ENCODE measurements at regions of chr16 and their contacts with region 1.

Region 1: GRCh38 chr16:83689385-83689831 is 118.4 kb upstream of the HSBP1 start:
- DNase-seq: peak in 1 of 2 donors; percentile 55
- ATAC-seq: peak; percentile 65
- H3K4me3 ChIP-seq: no peak overlapping the region
- H3K27ac ChIP-seq: peak overlapping the region in 1 of 2 donors; percentile 3
- H3K4me1 ChIP-seq: no peaks in the 10 kb centered on the region
- H3K27me3 ChIP-seq: no peaks in the 10 kb centered on the region

Region 2: GRCh38 chr16:83717814-83718213 is 28.4 kb after region 1 on chr16:
- intact Hi-C with region 1: loop called in 1 of 2 experiments (anchors 2 kb)
- DNase-seq: no peak
- ATAC-seq: no peak
- H3K4me3 ChIP-seq: no peak overlapping the region
- H3K27ac ChIP-seq: no peak overlapping the region
- H3K4me1 ChIP-seq: peaks cover 2 to 3% of the 10 kb centered on the region in 2 donors
- H3K27me3 ChIP-seq: no peaks in the 10 kb centered on the region

Region 3: DNA sequence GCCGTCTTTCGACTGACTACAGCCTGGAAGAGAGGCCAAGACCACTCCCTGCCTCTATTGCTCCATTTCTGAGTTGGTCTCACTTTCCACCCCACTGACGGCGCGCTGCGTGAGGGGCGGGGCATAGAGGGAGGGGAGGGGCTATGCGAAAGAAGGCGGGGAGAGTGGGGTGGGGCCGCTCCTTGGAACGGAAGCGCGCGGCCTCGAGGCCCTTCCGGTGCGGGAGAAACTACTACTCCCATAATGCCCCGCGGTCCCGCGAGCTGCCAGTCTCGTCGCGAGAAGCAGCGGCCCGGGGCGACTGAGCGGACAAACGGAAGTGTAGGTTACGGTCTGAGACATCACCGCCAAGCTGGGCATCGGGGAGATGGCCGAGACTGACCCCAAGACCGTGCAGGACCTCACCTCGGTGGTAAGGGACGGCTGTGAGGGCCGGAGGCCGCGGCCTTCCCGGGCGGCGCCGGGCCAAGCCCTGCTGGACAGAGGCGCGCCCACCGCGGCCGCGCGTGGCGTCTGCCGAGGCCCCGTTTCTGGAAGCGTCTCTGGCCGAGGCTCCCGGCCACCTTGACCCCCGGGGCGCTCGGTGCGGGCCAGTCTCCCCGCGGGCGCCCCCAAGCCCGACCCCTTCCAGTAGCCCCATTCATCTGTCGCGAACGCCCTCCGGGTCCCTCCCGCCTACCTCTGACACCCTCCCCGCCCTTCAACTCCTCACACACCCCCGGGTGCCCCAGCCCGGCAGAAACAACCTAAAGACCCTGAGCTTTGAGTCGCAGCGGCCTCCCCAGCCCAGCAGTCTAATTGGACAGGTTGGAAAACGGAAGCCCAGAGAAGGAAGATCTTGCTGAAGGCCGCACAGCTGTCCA is 118.5 kb after region 1 on chr16 and contains the start of gene HSBP1:
- intact Hi-C with region 1: loop called (anchors 5 to 10 kb)
- DNase-seq: peak; percentile 97 to 98
- ATAC-seq: peak; percentile 98
- H3K4me3 ChIP-seq: peak within 1 kb of the TSS; percentile 46 to 66
- H3K27ac ChIP-seq: no peak within 1 kb of the TSS
- H3K4me1 ChIP-seq: peaks cover 0 to 5% of the 10 kb centered on the region in 2 donors
- H3K27me3 ChIP-seq: no peaks in the 10 kb centered on the region
- total RNA-seq, gene HSBP1: 71.0 to 74.3 TPM